ENCODE measurements at regions of chr16 and their contacts with region 1.

Region 1: GRCh38 chr16:73329363-73330292 is 281.7 kb upstream of the ZFHX3 start:
- DNase-seq: no peak
- H3K4me3 ChIP-seq: no peak overlapping the region
- CTCF ChIP-seq: no peak

Region 2: DNA sequence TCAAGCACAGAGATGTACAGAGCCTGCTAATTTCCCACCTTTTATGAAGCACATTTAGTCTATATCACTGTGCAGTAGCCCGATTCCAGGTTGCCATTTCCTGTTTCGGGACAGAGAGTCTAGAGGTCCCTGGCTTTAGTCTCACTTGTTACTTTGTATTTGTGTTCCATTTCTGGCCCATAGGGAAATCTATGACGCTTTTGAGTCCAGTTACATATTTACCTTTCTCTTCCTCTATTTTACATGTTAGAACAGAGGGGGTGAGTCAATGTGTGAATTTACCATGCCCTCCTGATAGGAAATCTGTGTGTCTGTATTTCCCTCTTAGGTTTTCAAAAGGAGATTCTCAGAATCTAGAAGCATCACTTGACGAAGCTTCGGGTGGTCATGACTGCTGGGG is 54.6 kb before region 1 on chr16:
- in situ Hi-C with region 1: loop called (anchors 5 kb)
- DNase-seq: no peak
- H3K4me3 ChIP-seq: no peak overlapping the region
- CTCF ChIP-seq: no peak